ENCODE measurements at regions of chr7 and their contacts with region 1.

Region 1: DNA sequence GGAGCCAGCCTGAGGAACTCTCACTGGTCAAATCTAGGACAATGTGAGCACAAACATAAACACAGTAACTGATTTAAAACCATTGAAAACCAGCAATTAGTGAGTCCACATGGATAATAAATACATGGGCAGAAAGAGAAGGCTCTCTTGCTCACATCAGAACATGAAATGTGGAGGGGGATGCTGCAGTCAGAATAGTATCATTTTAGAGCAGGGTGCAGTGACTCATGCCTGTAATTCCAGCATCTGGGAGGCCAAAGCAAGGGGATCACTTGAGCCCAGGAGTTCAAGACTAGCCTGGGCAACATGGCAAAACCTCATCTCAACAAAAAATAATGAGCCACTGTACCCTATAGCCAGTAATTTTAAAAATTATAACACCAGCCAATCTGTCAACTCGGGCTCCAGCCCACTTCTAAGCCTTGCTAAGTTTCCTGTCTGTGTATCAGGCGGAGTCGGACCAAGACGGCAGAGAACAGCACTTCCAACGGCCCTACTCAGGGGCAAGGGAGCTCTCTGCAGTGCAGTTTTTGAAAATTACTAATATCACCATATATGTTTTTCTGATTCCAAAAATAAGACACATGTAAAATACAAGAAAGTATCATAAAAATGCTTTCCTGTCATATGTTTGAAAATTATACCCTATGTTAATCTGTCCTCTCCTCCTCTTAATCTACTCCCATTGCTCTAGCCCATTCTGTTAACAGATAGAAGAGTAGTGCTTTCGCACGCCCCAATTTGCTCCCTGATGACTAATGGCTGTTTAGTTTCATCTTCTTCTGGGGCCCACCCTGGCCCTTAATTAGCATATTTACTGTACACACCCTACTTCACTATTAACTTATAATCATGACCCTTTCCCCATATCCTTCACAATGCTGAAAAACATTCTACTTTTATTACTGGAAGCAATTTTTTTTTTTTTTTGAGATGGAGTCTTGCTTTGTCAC is 17.1 kb downstream of the URGCP start:
- DNase-seq: no peak
- H3K4me3 Mint-ChIP-seq: no peak overlapping the region
- H3K27ac Mint-ChIP-seq: no peak overlapping the region
- H3K4me1 Mint-ChIP-seq: peaks cover 38% of the 10 kb centered on the region
- H3K27me3 Mint-ChIP-seq: no peaks in the 10 kb centered on the region

Region 2: DNA sequence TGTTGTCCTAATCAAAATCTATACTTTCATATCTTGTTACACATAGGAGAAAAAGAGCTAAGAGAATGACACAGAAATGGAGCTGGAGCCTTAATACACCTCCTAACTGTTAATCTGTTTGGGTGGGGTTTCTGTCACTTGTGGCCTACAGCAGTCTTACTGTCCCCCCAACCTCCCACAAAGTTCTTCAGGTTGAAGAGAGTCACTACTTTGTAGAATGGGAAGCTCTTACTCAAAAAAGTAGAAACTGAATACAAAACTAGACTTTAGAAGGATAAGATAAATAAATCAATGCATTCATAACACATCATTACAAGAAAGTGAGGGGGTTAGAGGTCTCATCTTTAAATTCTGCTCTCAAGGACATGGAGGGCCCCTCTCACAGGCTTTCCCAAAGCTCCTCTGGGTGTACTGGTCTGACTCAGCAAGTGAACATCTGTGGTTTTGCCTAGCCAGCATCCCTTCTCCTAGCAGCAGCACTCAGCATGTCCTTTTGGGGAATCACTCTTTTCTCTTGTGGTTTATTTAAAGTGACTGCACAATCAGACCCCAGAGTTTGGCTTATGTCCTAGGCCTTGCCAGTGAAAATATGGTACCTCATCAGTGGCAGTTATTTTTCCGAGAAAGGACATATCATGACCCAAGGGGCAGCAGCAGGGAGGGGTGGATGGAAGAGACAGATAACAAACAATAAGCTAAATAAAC is 132.7 kb before region 1 on chr7:
- CTCF ChIA-PET with region 1: no interaction called
- POLR2A ChIA-PET with region 1: no interaction called
- DNase-seq: no peak
- H3K4me3 Mint-ChIP-seq: peak overlapping the region; percentile 74
- H3K27ac Mint-ChIP-seq: no peak overlapping the region
- H3K4me1 Mint-ChIP-seq: peaks cover 38% of the 10 kb centered on the region
- H3K27me3 Mint-ChIP-seq: peaks cover 12% of the 10 kb centered on the region

Region 3: GRCh38 chr7:43876241-43876640 is 13.0 kb before region 1 on chr7:
- CTCF ChIA-PET with region 1: interaction called, 10 read pairs
- POLR2A ChIA-PET with region 1: no interaction called
- DNase-seq: no peak
- H3K4me3 Mint-ChIP-seq: no peak overlapping the region
- H3K27ac Mint-ChIP-seq: no peak overlapping the region
- H3K4me1 Mint-ChIP-seq: no peaks in the 10 kb centered on the region
- H3K27me3 Mint-ChIP-seq: no peaks in the 10 kb centered on the region

Measured in activated CD4-positive, alpha-beta T cell treated with anti-CD3 and anti-CD28 coated beads, Interleukin-2, amount 10 ng/mL, durations not matched to agents 7 days and 5 days (primary cell).